ENCODE measurements at regions of chr10 and their contacts with region 1.

Region 1: GRCh38 chr10:71383972-71384687 is 12.6 kb upstream of the CDH23 start:
- DNase-seq: peak; percentile 21
- ATAC-seq: peak; percentile 98
- H3K4me3 ChIP-seq: no peak overlapping the region
- H3K27ac ChIP-seq: no peak overlapping the region
- H3K4me1 ChIP-seq: no peaks in the 10 kb centered on the region
- H3K27me3 ChIP-seq: peaks cover 44% of the 10 kb centered on the region
- CTCF ChIP-seq: peak; percentile 83
- POLR2A ChIP-seq: no peak
- RAD21 ChIP-seq: peak; percentile 77

Region 2: GRCh38 chr10:71569775-71570588 is 185.9 kb after region 1 on chr10:
- CTCF ChIA-PET with region 1: interaction called, 3 read pairs
- POLR2A ChIA-PET with region 1: no interaction called
- dilution Hi-C with region 1: no loop called
- in situ Hi-C with region 1: no loop called
- intact Hi-C with region 1: loop called (anchors 1 kb)
- DNase-seq: peak; percentile 23
- ATAC-seq: peak; percentile 77
- H3K4me3 ChIP-seq: no peak overlapping the region
- H3K27ac ChIP-seq: no peak overlapping the region
- H3K4me1 ChIP-seq: no peaks in the 10 kb centered on the region
- H3K27me3 ChIP-seq: peaks cover 31% of the 10 kb centered on the region
- CTCF ChIP-seq: peak; percentile 68
- POLR2A ChIP-seq: no peak
- RAD21 ChIP-seq: peak; percentile 65

Region 3: GRCh38 chr10:71708301-71708703 is 324.2 kb after region 1 on chr10:
- CTCF ChIA-PET with region 1: no interaction called
- POLR2A ChIA-PET with region 1: no interaction called
- dilution Hi-C with region 1: no loop called
- in situ Hi-C with region 1: no loop called
- intact Hi-C with region 1: loop called (anchors 1 kb)
- DNase-seq: no peak
- ATAC-seq: peak; percentile 72
- H3K4me3 ChIP-seq: no peak overlapping the region
- H3K27ac ChIP-seq: no peak overlapping the region
- H3K4me1 ChIP-seq: peaks cover 3% of the 10 kb centered on the region; the same call in 1 of the 2 replicates
- H3K27me3 ChIP-seq: peaks cover 27% of the 10 kb centered on the region
- CTCF ChIP-seq: peak; percentile 62
- POLR2A ChIP-seq: no peak
- RAD21 ChIP-seq: peak; percentile 73